BJ (cell line): ENCODE measurements at regions of chr11 and their contacts with region 1.

Region 1: DNA sequence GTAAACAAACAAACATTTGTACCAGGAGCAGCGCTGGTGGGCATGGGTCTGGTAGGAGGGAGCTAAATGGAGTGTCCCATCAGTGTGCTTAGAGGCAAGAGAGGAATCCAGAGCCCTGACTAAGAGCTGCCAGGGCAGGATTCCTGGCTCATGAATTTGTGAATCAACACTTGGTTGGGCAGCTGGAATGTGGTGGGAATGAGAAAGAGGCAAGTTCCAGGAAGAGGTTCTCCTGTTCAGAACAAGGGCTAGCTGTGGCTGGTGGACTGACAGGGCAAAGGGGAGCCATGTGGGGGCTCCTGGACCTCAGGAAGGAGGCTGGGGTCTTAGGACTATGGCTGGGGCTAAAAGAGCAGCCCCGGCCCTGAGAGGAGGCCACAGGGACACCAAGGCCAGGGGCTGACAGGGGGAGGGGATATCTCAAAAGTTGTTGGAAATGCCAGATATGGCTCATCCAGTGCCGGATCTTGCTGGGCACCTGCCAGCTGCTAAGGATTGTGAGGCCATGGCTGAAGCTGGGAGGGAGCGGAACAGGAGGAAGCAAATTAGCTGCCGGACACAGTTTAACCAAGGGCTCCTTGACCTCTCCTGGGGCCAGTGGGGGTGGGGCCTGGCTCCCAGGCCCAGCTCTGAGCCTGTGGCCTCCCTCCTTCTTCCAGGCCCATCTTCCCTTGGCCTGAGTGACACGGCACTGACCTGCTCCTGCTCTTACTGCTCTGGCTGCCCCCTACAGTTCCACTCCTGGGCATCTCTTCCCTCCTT is 14.6 kb upstream of the P2RY6 start:
- DNase-seq: peak; percentile 78
- H3K4me3 ChIP-seq: no peak overlapping the region
- H3K27me3 ChIP-seq: no peaks in the 10 kb centered on the region
- CTCF ChIP-seq: no peak

Region 2: GRCh38 chr11:73184953-73185671 is 72.4 kb before region 1 on chr11:
- CTCF ChIA-PET with region 1: interaction called, 10 read pairs
- POLR2A ChIA-PET with region 1: no interaction called
- DNase-seq: no peak
- H3K4me3 ChIP-seq: no peak overlapping the region
- H3K27me3 ChIP-seq: no peaks in the 10 kb centered on the region; the same call in 1 of the 2 replicates
- CTCF ChIP-seq: peak; percentile 90

Region 3: DNA sequence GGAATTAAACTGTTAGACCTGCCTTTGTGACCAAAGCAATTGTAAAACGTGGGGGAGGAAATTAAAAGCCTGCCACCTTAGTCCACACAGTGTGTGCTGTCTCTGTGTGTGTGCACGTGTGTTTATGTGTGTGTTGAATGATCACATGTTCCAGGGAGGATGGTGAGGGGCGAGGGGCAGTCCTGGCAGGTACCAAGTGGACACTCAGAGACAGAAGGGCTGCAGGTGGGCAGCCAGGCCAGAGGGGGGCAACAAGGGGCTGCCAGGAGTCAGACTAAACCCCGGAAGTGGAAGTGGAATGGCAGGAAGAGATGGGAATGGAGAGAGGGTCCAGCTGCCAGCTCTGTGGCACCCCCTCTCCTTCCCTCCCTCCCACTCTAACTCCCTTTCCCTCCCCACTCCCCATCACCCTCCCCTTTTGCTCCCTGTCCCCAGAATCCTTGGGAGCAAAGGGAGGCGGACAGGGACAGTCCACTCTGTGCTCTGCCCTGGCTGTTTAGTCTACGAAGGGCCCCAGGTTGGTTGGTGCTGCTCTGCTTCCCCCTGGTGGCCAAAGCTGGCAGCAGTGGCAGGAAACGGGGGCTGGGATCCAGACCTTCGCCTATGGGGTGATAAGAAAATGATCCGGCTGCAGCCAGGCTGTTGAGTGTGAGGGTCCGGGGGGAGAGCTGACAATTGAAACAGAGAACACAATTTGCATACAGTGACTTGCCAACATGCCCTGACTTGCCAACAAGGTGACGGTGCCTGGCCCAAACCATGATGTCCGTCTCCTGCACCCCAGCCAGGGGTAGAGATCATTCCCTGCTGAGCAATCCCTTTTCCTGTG is 15.1 kb before region 1 on chr11:
- CTCF ChIA-PET with region 1: interaction called, 11 read pairs
- POLR2A ChIA-PET with region 1: interaction called, 10 read pairs
- DNase-seq: no peak
- H3K4me3 ChIP-seq: no peak overlapping the region
- H3K27me3 ChIP-seq: no peaks in the 10 kb centered on the region
- CTCF ChIP-seq: peak; percentile 98

Region 4: GRCh38 chr11:73271936-73272719 is 14.6 kb after region 1 on chr11 and contains the start of gene P2RY6:
- CTCF ChIA-PET with region 1: interaction called, 8 read pairs
- POLR2A ChIA-PET with region 1: interaction called, 10 read pairs
- DNase-seq: no peak
- H3K4me3 ChIP-seq: no peak within 1 kb of the TSS
- H3K27me3 ChIP-seq: peaks cover 8% of the 10 kb centered on the region; the same call in 1 of the 2 replicates
- CTCF ChIP-seq: no peak
- polyA plus RNA-seq, gene P2RY6: 0.56 and 1.5 TPM in 2 replicates